ENCODE measurements at regions of chr2 and their contacts with region 1.

Region 1: GRCh38 chr2:20097879-20098714 is 46.7 kb upstream of the LAPTM4A start:
- DNase-seq: peak; percentile 45
- H3K4me3 Mint-ChIP-seq: no peak overlapping the region
- H3K27ac Mint-ChIP-seq: no peak overlapping the region
- H3K4me1 Mint-ChIP-seq: no peaks in the 10 kb centered on the region
- H3K27me3 Mint-ChIP-seq: peaks cover 17% of the 10 kb centered on the region

Region 2: GRCh38 chr2:18520451-18521425 is 1577.4 kb before region 1 on chr2:
- intact Hi-C with region 1: loop called (anchors 1 kb)
- DNase-seq: peak; percentile 46
- H3K4me3 Mint-ChIP-seq: no peak overlapping the region
- H3K27ac Mint-ChIP-seq: no peak overlapping the region
- H3K4me1 Mint-ChIP-seq: no peaks in the 10 kb centered on the region
- H3K27me3 Mint-ChIP-seq: peaks cover 8% of the 10 kb centered on the region

Region 3: GRCh38 chr2:19901442-19902215 is 196.5 kb before region 1 on chr2 and contains the start of gene TTC32:
- intact Hi-C with region 1: loop called (anchors 2 kb)
- DNase-seq: peak; percentile 89
- H3K4me3 Mint-ChIP-seq: peak within 1 kb of the TSS; percentile 91
- H3K27ac Mint-ChIP-seq: peak within 1 kb of the TSS; percentile 94
- H3K4me1 Mint-ChIP-seq: peaks cover 48% of the 10 kb centered on the region
- H3K27me3 Mint-ChIP-seq: peaks cover 9% of the 10 kb centered on the region
- total RNA-seq, gene TTC32: 14.0 and 15.7 TPM in 2 replicates

Region 4: DNA sequence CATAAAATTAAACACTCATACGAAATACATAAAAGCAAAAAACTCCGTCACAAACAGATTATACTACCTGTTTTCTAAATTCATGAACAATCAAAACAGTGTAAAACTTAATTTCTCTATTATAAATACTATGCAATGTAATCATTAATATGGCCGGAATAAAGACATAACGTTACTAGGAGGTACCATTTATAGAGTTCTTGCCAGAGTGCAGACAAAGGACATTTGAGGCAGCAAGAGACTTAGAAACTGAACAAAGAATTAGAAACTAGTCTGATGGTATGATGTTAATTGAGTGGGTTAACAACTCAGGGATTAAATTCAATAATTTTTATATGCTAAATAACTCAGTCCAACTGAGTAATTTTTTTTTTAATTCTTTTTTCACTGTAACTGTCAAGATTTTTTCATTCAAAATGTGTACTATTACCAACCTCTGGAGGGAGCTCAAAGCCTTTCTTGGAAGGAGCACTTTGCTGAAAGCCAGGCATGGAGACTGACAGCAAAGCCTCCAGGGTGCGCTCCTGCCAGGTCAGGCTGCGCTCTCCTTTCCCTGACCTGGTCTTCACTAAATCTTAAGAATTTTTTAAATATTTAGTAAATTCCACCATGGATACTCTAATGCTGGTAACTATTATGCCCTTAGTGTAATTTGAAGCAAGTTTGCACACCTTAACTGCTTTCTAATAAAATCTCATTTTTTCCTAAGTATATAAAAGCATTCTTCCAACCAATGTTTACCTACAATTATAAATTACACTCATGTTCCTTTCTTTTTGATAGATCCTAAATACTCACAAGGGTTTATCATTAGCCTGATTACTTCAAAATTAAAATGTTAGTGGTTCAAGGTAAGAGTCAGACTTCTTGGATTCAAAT is 142.3 kb before region 1 on chr2:
- intact Hi-C with region 1: loop called (anchors 1 kb)
- DNase-seq: peak; percentile 24
- H3K4me3 Mint-ChIP-seq: no peak overlapping the region
- H3K27ac Mint-ChIP-seq: no peak overlapping the region
- H3K4me1 Mint-ChIP-seq: no peaks in the 10 kb centered on the region
- H3K27me3 Mint-ChIP-seq: no peaks in the 10 kb centered on the region

Region 5: GRCh38 chr2:20015472-20016083 is 82.5 kb before region 1 on chr2:
- intact Hi-C with region 1: loop called (anchors 1 kb)
- DNase-seq: no peak
- H3K4me3 Mint-ChIP-seq: no peak overlapping the region
- H3K27ac Mint-ChIP-seq: no peak overlapping the region
- H3K4me1 Mint-ChIP-seq: no peaks in the 10 kb centered on the region
- H3K27me3 Mint-ChIP-seq: peaks cover 47% of the 10 kb centered on the region

Measured in activated T-helper 1 cell treated with anti-CD3 and anti-CD28 coated beads, Interleukin-12 subunit alpha, Interleukin-12 subunit beta, Interleukin-2, Interleukin-4 antibody, amounts not matched to agents 30 ng/mL and 10 ng/mL and 1 ng/mL, durations not matched to agents 14 hours and 24 hours and 36 hours (primary cell).